Naive thymus-derived CD4-positive, alpha-beta T cell (primary cell): ENCODE measurements at regions of chr5 and their contacts with region 1.

Region 1: GRCh38 chr5:16160706-16161105 is 18.9 kb downstream of the MARCHF11 start:
- DNase-seq: peak in 4 of 9 donors; percentile 2 to 11 (median 3)
- ATAC-seq: no peak
- H3K4me3 ChIP-seq: no peak overlapping the region
- H3K4me3 Mint-ChIP-seq: no peak overlapping the region
- H3K27ac ChIP-seq: no peak overlapping the region
- H3K27ac Mint-ChIP-seq: no peak overlapping the region
- H3K4me1 ChIP-seq: no peaks in the 10 kb centered on the region
- H3K4me1 Mint-ChIP-seq: no peaks in the 10 kb centered on the region
- H3K27me3 ChIP-seq: no peaks in the 10 kb centered on the region
- H3K27me3 Mint-ChIP-seq: peaks cover 0 to 13% (median 6%) of the 10 kb centered on the region in 5 donors

Region 2: GRCh38 chr5:15977851-15978250 is 182.9 kb before region 1 on chr5:
- CTCF ChIA-PET with region 1: no interaction called
- POLR2A ChIA-PET with region 1: no interaction called
- intact Hi-C with region 1: no loop called
- DNase-seq: no peak
- ATAC-seq: no peak
- H3K4me3 ChIP-seq: no peak overlapping the region
- H3K4me3 Mint-ChIP-seq: no peak overlapping the region
- H3K27ac ChIP-seq: no peak overlapping the region
- H3K27ac Mint-ChIP-seq: no peak overlapping the region
- H3K4me1 ChIP-seq: no peaks in the 10 kb centered on the region
- H3K4me1 Mint-ChIP-seq: no peaks in the 10 kb centered on the region
- H3K27me3 ChIP-seq: no peaks in the 10 kb centered on the region
- H3K27me3 Mint-ChIP-seq: peaks cover 0 to 3% (median 0%) of the 10 kb centered on the region in 5 donors

Region 3: GRCh38 chr5:16456103-16456832 is 295.6 kb after region 1 on chr5:
- CTCF ChIA-PET with region 1: interaction called, 9 read pairs
- POLR2A ChIA-PET with region 1: no interaction called
- intact Hi-C with region 1: loop called in 1 of 2 experiments (anchors 1 kb)
- DNase-seq: peak in 7 of 9 donors; percentile 25 to 70 (median 59)
- ATAC-seq: peak; percentile 78
- H3K4me3 ChIP-seq: no peak overlapping the region
- H3K4me3 Mint-ChIP-seq: peak overlapping the region; percentile 6 to 80 (median 63)
- H3K27ac ChIP-seq: peak overlapping the region; percentile 28
- H3K27ac Mint-ChIP-seq: peak overlapping the region; percentile 3 to 84 (median 65)
- H3K4me1 ChIP-seq: peaks cover 9 to 20% of the 10 kb centered on the region in 2 donors
- H3K4me1 Mint-ChIP-seq: peaks cover 34 to 78% (median 64%) of the 10 kb centered on the region in 7 donors
- H3K27me3 ChIP-seq: no peaks in the 10 kb centered on the region
- H3K27me3 Mint-ChIP-seq: no peaks in the 10 kb centered on the region

Region 4: DNA sequence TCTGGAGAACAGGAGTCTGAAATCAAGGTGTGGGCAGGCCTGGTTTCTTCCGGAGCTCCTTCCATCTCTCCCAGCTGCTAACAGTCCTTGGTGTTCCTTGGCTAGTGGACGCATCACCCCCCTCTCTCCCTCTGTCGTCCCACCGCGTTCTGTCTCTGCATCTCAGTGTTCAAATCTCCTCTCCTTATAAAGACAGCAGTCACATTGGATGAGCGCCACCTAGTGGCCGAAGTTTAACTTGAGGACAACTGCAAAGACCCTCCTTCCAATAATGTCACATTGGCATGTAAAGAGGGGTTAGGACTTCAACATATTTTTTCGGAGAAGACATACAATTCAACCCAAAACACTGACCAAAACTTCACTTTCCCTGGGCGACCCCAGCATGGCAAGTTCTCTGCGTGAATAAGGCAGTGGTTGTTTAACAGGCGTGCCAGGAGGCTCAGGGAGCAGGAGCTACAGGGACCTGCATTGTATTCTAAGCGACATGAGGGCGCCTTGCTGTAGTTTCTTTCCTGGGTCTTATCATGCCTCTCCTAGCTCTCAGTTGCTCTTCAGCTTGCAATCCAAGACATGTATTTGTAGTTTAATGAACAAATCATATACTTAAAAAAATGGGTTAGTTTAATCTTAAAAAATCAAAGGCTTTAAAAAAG is 1028.8 kb after region 1 on chr5:
- CTCF ChIA-PET with region 1: no interaction called
- POLR2A ChIA-PET with region 1: no interaction called
- intact Hi-C with region 1: loop called in 1 of 2 experiments (anchors 10 kb)
- DNase-seq: peak; percentile 5 to 52 (median 37)
- ATAC-seq: no peak
- H3K4me3 ChIP-seq: no peak overlapping the region
- H3K4me3 Mint-ChIP-seq: no peak overlapping the region
- H3K27ac ChIP-seq: no peak overlapping the region
- H3K27ac Mint-ChIP-seq: peak overlapping the region in 1 of 9 donors; percentile 60
- H3K4me1 ChIP-seq: no peaks in the 10 kb centered on the region
- H3K4me1 Mint-ChIP-seq: peaks cover 0 to 7% (median 3%) of the 10 kb centered on the region in 7 donors
- H3K27me3 ChIP-seq: no peaks in the 10 kb centered on the region
- H3K27me3 Mint-ChIP-seq: peaks cover 0 to 29% (median 6%) of the 10 kb centered on the region in 5 donors